Heart right ventricle (tissue), 16 donors: ENCODE measurements at regions of chr3 and their contacts with region 1.

Region 1: GRCh38 chr3:134794950-134795745 is at the start of gene EPHB1:
- DNase-seq: peak; percentile 79 to 80
- ATAC-seq: peak; percentile 86 to 96 (median 92)
- H3K4me3 ChIP-seq: peak within 1 kb of the TSS; percentile 12 to 67 (median 58)
- H3K27ac ChIP-seq: peak within 1 kb of the TSS in 1 of 10 donors; percentile 4
- H3K4me1 ChIP-seq: peaks cover 10 to 30% (median 21%) of the 10 kb centered on the region in 9 donors
- H3K27me3 ChIP-seq: peaks cover 0 to 45% (median 34%) of the 10 kb centered on the region in 7 donors
- CTCF ChIP-seq: peak; percentile 88 to 97 (median 94)
- total RNA-seq, gene EPHB1: 1.1 to 3.4 (median 1.8) TPM

Region 2: GRCh38 chr3:134737516-134737915 is 57.6 kb before region 1 on chr3:
- intact Hi-C with region 1: no loop called
- DNase-seq: no peak
- ATAC-seq: no peak
- H3K4me3 ChIP-seq: no peak overlapping the region
- H3K27ac ChIP-seq: no peak overlapping the region
- H3K4me1 ChIP-seq: no peaks in the 10 kb centered on the region
- H3K27me3 ChIP-seq: peaks cover 0 to 5% (median 0%) of the 10 kb centered on the region in 7 donors
- CTCF ChIP-seq: no peak

Region 3: GRCh38 chr3:134754768-134755559 is 40.2 kb before region 1 on chr3:
- intact Hi-C with region 1: no loop called
- DNase-seq: peak; percentile 13 to 29
- ATAC-seq: peak in 3 of 8 donors; percentile 28 to 43 (median 41)
- H3K4me3 ChIP-seq: no peak overlapping the region
- H3K27ac ChIP-seq: no peak overlapping the region
- H3K4me1 ChIP-seq: peaks cover 0 to 21% (median 5%) of the 10 kb centered on the region in 9 donors
- H3K27me3 ChIP-seq: peaks cover 0 to 6% (median 0%) of the 10 kb centered on the region in 7 donors
- CTCF ChIP-seq: peak; percentile 17 to 69 (median 51)

Region 4: GRCh38 chr3:134852893-134853351 is 57.8 kb after region 1 on chr3:
- intact Hi-C with region 1: no loop called
- DNase-seq: no peak
- ATAC-seq: peak in 4 of 8 donors; percentile 12 to 51 (median 38)
- H3K4me3 ChIP-seq: no peak overlapping the region
- H3K27ac ChIP-seq: no peak overlapping the region
- H3K4me1 ChIP-seq: peaks cover 0 to 24% (median 13%) of the 10 kb centered on the region in 9 donors
- H3K27me3 ChIP-seq: peaks cover 0 to 10% (median 0%) of the 10 kb centered on the region in 7 donors
- CTCF ChIP-seq: no peak

Region 5: DNA sequence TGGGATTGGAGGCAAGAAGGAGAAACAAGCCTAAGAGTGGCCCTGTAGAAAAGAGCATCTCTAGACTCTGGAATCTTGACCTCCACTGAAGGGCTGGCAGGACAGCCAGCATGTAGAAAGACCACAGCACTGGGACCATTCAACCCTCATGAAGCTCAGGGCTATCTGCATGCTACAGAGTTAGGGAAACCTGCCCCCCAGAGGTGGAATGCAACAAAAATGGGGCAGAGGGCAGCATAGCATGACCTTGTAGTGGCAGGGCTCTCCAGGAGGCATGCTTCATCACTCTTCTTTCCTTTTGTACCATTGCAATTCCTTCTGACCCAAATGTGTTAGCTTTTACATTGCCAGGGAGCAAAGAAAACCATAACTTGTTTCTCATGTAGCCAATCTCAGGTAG is 445.3 kb after region 1 on chr3:
- intact Hi-C with region 1: loop called in 6 of 10 experiments (anchors 10 kb)
- DNase-seq: no peak
- ATAC-seq: peak in 1 of 8 donors; percentile 41
- H3K4me3 ChIP-seq: no peak overlapping the region
- H3K27ac ChIP-seq: no peak overlapping the region
- H3K4me1 ChIP-seq: no peaks in the 10 kb centered on the region
- H3K27me3 ChIP-seq: peaks cover 0 to 17% (median 0%) of the 10 kb centered on the region in 7 donors
- CTCF ChIP-seq: peak in 2 of 9 donors; percentile 9 to 18

Region 6: DNA sequence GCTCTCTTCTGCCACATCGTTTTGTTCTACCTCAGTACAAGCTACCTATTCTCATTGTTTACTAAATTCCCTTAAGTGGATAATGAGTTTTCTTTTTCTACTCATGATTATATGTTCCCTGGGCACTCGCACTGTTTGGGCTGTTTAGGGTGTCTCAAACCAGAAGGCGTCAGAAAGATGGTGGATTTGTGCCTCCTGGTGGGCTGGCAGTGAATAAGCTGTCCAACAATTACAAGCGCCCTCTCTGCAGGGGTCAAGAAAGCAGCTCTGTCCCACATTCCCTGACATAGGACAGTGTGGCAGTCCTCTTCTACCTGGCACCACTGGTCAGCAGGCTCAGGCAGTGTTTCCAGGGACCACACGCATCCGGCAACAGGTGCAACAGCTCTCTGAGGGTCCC is 997.0 kb after region 1 on chr3:
- intact Hi-C with region 1: loop called in 1 of 10 experiments (anchors 10 kb)
- DNase-seq: no peak
- ATAC-seq: no peak
- H3K4me3 ChIP-seq: no peak overlapping the region
- H3K27ac ChIP-seq: no peak overlapping the region
- H3K4me1 ChIP-seq: no peaks in the 10 kb centered on the region
- H3K27me3 ChIP-seq: peaks cover 0 to 7% (median 0%) of the 10 kb centered on the region in 7 donors
- CTCF ChIP-seq: no peak

Region 7: GRCh38 chr3:135895106-135895733 is 1100.1 kb after region 1 on chr3:
- intact Hi-C with region 1: loop called (anchors 1 to 5 kb)
- DNase-seq: peak; percentile 57 to 70
- ATAC-seq: peak in 4 of 8 donors; percentile 52 to 66 (median 59)
- H3K4me3 ChIP-seq: no peak overlapping the region
- H3K27ac ChIP-seq: no peak overlapping the region
- H3K4me1 ChIP-seq: no peaks in the 10 kb centered on the region
- H3K27me3 ChIP-seq: no peaks in the 10 kb centered on the region
- CTCF ChIP-seq: peak; percentile 61 to 90 (median 84)

Region 8: DNA sequence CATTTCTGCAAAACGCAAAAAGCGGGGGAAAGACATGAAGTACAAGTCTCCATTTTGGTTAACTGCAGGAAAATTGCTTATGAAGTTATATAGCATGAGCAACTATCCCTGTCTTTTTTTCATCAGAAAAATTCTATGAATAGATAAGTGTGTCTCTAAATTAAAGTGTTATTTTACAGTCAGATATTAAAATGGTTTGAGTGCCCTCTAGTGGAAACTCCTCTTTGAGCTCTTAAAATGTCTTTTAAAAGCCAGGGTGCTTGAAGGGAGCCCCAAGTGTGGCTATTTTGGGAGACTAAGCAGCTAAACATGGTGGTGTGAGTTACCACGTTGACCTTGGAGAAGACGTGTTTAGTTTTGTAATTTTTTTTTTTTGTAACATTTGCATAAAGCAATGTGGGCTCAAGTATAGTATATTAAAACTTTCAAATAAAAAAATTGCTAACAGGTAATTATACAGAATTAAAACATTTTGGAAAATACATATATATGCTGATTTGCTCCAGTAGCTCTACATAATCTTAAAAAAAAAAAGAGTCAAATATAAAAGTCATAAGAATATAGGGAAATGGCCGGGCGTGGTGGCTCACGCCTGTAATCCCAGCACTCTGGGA is 1247.6 kb after region 1 on chr3:
- intact Hi-C with region 1: loop called in 2 of 10 experiments (anchors 10 kb)
- DNase-seq: no peak
- ATAC-seq: peak in 4 of 8 donors; percentile 26 to 60 (median 42)
- H3K4me3 ChIP-seq: no peak overlapping the region
- H3K27ac ChIP-seq: peak overlapping the region in 1 of 10 donors; percentile 7
- H3K4me1 ChIP-seq: peaks cover 0 to 10% (median 0%) of the 10 kb centered on the region in 9 donors
- H3K27me3 ChIP-seq: no peaks in the 10 kb centered on the region
- CTCF ChIP-seq: peak; percentile 33 to 77 (median 67)